HCT116 (cell line): ENCODE measurements at regions of chr1 and their contacts with region 1.

Region 1: DNA sequence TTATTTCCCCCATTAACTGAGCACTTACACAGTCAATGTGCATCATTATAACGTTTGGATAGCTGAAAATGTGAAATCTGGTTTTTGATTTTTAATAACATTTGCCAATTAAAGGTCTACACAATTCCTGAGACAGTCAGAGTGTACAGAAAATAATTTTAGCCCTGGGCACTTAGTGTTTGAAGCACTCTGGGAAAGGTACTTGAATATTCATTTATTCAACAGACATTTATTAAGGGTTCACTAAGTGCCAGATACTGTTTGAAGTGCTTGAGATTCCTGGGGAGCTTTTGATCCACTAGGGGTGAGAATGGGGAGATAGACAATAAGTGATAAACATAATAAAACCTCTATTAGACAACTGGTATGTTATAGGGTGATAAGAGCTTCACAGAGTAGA is 141.8 kb downstream of the DISC1 start:
- DNase-seq: no peak
- ATAC-seq: no peak
- H3K4me3 ChIP-seq: no peak overlapping the region
- H3K27ac ChIP-seq: no peak overlapping the region
- H3K4me1 ChIP-seq: peaks cover 15 to 22% of the 10 kb centered on the region in 2 experiments
- H3K27me3 ChIP-seq: no peaks in the 10 kb centered on the region
- CTCF ChIP-seq: no peak
- POLR2A ChIP-seq: no peak
- RAD21 ChIP-seq: no peak

Region 2: GRCh38 chr1:231757101-231757404 is 11.4 kb before region 1 on chr1:
- CTCF ChIA-PET with region 1: interaction called, 28 read pairs
- POLR2A ChIA-PET with region 1: no interaction called
- RAD21 ChIA-PET with region 1: no interaction called
- intact Hi-C with region 1: no loop called
- DNase-seq: peak; percentile 2
- ATAC-seq: peak; percentile 62
- H3K4me3 ChIP-seq: no peak overlapping the region
- H3K27ac ChIP-seq: no peak overlapping the region
- H3K4me1 ChIP-seq: no peaks in the 10 kb centered on the region
- H3K27me3 ChIP-seq: no peaks in the 10 kb centered on the region
- CTCF ChIP-seq: no peak; a peak in 1 of 6 replicates
- POLR2A ChIP-seq: no peak
- RAD21 ChIP-seq: no peak